ENCODE measurements at regions of chr1 and their contacts with region 1.

Region 1: GRCh38 chr1:91929250-91929649 is 20.0 kb upstream of the BRDT start:
- DNase-seq: no peak
- ATAC-seq: no peak
- H3K4me3 ChIP-seq: no peak overlapping the region
- H3K27ac ChIP-seq: no peak overlapping the region
- H3K4me1 ChIP-seq: no peaks in the 10 kb centered on the region
- H3K27me3 ChIP-seq: no peaks in the 10 kb centered on the region
- CTCF ChIP-seq: no peak

Region 2: GRCh38 chr1:90761781-90762589 is 1167.3 kb before region 1 on chr1:
- CTCF ChIA-PET with region 1: no interaction called
- POLR2A ChIA-PET with region 1: no interaction called
- in situ Hi-C with region 1: no loop called
- intact Hi-C with region 1: no loop called
- DNase-seq: no peak
- ATAC-seq: peak; percentile 45; the same call in 1 of the 2 replicates
- H3K4me3 ChIP-seq: no peak overlapping the region
- H3K27ac ChIP-seq: no peak overlapping the region
- H3K4me1 ChIP-seq: no peaks in the 10 kb centered on the region
- H3K27me3 ChIP-seq: peaks cover 3% of the 10 kb centered on the region; the same call in 1 of the 2 replicates
- CTCF ChIP-seq: no peak

Region 3: DNA sequence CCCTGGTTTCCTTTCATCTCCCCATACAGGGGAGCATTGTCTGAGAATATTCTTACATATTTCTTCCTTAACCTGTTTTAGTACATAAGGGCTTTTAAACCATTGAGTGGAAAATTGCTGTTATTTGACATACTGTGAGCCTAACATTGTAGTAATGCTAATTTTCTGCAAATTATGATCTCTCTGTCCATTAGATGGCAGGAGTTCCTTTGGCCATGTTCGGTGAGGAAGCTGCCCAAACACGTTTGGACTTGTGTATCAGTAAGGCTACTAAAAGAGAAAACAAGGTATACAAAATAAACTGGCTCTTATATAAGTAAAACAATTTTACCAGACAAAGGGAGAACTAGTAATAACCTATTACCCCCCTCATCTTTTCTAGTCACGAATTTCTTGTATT is 399.4 kb before region 1 on chr1:
- CTCF ChIA-PET with region 1: no interaction called
- POLR2A ChIA-PET with region 1: no interaction called
- in situ Hi-C with region 1: no loop called
- intact Hi-C with region 1: loop called (anchors 5 kb)
- DNase-seq: peak; percentile 8
- ATAC-seq: peak; percentile 82
- H3K4me3 ChIP-seq: no peak overlapping the region
- H3K27ac ChIP-seq: peak overlapping the region; percentile 11; the same call in 1 of the 2 replicates
- H3K4me1 ChIP-seq: no peaks in the 10 kb centered on the region; the same call in 1 of the 2 replicates
- H3K27me3 ChIP-seq: no peaks in the 10 kb centered on the region
- CTCF ChIP-seq: peak; percentile 68; the same call in 1 of the 2 replicates

Measured in Panc1 (cell line).